G401 (cell line): ENCODE measurements at regions of chr1 and their contacts with region 1.

Region 1: GRCh38 chr1:24199289-24199900 is 12.3 kb upstream of the IFNLR1 start:
- DNase-seq: peak; percentile 84

Region 2: DNA sequence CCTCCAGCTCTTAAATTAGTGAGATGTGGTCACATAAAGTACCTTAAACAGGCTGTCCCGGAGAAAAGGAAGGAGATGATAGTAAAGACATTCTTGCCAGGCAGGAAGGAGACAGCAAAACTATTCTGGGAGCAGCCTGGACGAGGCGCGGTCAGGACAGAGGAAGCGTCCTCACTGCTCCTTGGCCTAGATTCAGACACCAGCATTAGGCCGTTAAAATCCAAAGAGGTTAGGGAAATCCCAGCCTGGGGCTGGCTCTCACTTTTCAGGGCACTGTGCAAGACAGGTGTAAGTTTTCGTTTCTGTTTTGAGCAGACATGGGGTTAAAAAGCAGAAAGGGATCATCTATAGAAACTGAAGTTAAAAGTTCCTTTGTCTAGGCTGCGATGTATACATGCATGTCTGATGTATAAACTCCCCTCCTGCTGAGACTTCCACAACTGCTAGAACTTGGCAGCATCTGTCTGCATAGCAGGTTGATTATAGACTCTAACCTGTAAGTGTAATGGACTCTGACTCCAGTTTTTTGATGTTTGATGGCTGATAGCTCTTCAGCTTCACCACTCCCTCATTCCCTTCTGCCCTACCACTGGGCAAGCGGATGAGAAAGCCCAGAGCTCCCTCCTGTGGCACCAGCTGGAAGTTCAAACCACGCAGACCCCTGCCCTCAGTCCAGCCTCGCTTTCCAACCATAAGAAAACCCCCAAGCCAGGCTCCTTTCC is 192.6 kb after region 1 on chr1:
- in situ Hi-C with region 1: loop called (anchors 25 kb)
- DNase-seq: peak; percentile 79